ENCODE measurements at regions of chr22 and their contacts with region 1.

Region 1: DNA sequence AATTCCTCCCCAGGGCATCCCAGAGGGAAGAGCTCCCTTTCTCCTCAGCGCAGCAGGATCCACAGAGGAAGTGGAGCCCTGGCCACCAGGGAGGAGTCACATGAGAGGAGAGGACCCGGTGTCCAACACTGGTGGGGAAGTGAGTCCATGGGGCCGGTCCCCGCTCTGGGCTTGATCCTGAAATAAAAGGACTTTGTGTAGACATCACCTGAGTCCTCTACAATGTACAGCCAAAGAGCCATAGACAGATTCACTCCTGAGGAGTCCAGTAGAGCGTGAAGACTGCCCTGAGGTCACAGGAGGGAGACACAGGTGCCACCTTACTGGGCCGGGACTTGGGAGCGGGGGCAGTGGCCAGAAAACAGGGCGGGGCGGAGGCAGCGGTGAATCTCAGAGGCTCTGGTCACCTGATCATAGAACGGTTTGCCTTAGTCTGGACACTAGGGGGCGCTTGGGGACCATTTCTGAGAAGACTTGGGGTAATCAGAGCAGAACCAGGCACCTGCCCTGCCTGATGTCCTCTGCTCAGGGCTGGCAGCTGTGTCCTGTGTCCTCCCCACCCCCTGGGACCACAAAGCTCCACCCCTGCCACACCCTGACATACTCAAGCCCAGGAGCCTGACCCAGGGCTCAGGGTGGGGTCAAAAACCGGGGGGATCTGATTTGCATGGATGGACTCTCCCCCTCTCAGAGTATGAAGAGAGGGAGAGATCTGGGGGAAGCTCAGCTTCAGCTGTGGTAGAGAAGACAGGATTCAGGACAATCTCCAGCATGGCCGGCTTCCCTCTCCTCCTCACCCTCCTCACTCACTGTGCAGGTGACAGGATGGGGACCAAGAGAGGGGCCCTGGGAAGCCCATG is 112.7 kb downstream of the VPREB1 start:
- DNase-seq: peak; percentile 65 to 75 (median 70)
- ATAC-seq: peak; percentile 81 to 91 (median 86)
- H3K4me3 ChIP-seq: no peak overlapping the region
- H3K27ac ChIP-seq: no peak overlapping the region
- H3K4me1 ChIP-seq: peaks cover 0 to 3% (median 0%) of the 10 kb centered on the region in 12 donors
- H3K27me3 ChIP-seq: peaks cover 0 to 46% (median 3%) of the 10 kb centered on the region in 9 donors
- CTCF ChIP-seq: peak; percentile 45 to 70 (median 59)
- POLR2A ChIP-seq: no peak

Region 2: GRCh38 chr22:22422629-22423112 is 65.4 kb after region 1 on chr22:
- intact Hi-C with region 1: loop called in 1 of 10 experiments (anchors 10 kb)
- DNase-seq: peak in 4 of 5 donors; percentile 29 to 55 (median 40)
- ATAC-seq: no peak
- H3K4me3 ChIP-seq: no peak overlapping the region
- H3K27ac ChIP-seq: no peak overlapping the region
- H3K4me1 ChIP-seq: no peaks in the 10 kb centered on the region
- H3K27me3 ChIP-seq: peaks cover 0 to 49% (median 3%) of the 10 kb centered on the region in 9 donors
- CTCF ChIP-seq: peak; percentile 33 to 76 (median 64)
- POLR2A ChIP-seq: no peak